T-cell (primary cell): ENCODE measurements at regions of chr2 and their contacts with region 1.

Region 1: GRCh38 chr2:223993621-223994232 is 36.5 kb downstream of the MRPL44 start:
- DNase-seq: peak; percentile 6 to 81 (median 46)
- ATAC-seq: peak in 3 of 4 experiments; percentile 51 to 71 (median 70)
- H3K4me3 ChIP-seq: no peak overlapping the region
- H3K4me3 Mint-ChIP-seq: no peak overlapping the region
- H3K27ac ChIP-seq: no peak overlapping the region
- H3K27ac Mint-ChIP-seq: no peak overlapping the region
- H3K4me1 ChIP-seq: no peaks in the 10 kb centered on the region
- H3K4me1 Mint-ChIP-seq: no peaks in the 10 kb centered on the region
- H3K27me3 ChIP-seq: peaks cover 0 to 2% of the 10 kb centered on the region in 2 experiments
- H3K27me3 Mint-ChIP-seq: no peaks in the 10 kb centered on the region

Region 2: GRCh38 chr2:224062481-224063297 is 69.0 kb after region 1 on chr2:
- CTCF ChIA-PET with region 1: interaction called, 27 to 37 read pairs
- POLR2A ChIA-PET with region 1: interaction called in 1 of 2 experiments, 6 read pairs
- DNase-seq: peak in 1 of 35 experiments; percentile 15
- ATAC-seq: no peak
- H3K4me3 ChIP-seq: no peak overlapping the region
- H3K4me3 Mint-ChIP-seq: no peak overlapping the region
- H3K27ac ChIP-seq: no peak overlapping the region
- H3K27ac Mint-ChIP-seq: no peak overlapping the region
- H3K4me1 ChIP-seq: no peaks in the 10 kb centered on the region
- H3K4me1 Mint-ChIP-seq: no peaks in the 10 kb centered on the region
- H3K27me3 ChIP-seq: no peaks in the 10 kb centered on the region
- H3K27me3 Mint-ChIP-seq: peaks cover 0 to 8% of the 10 kb centered on the region in 2 donors

Region 3: GRCh38 chr2:224284134-224284946 is 290.6 kb after region 1 on chr2:
- CTCF ChIA-PET with region 1: interaction called, 74 to 121 read pairs
- POLR2A ChIA-PET with region 1: no interaction called
- DNase-seq: peak in 5 of 35 experiments; percentile 10 to 57 (median 14)
- ATAC-seq: no peak
- H3K4me3 ChIP-seq: no peak overlapping the region
- H3K4me3 Mint-ChIP-seq: no peak overlapping the region
- H3K27ac ChIP-seq: no peak overlapping the region
- H3K27ac Mint-ChIP-seq: no peak overlapping the region
- H3K4me1 ChIP-seq: no peaks in the 10 kb centered on the region
- H3K4me1 Mint-ChIP-seq: no peaks in the 10 kb centered on the region
- H3K27me3 ChIP-seq: peaks cover 0 to 13% of the 10 kb centered on the region in 2 experiments
- H3K27me3 Mint-ChIP-seq: peaks cover 23 to 40% of the 10 kb centered on the region in 2 donors